ENCODE measurements at regions of chr9 and their contacts with region 1.

Region 1: DNA sequence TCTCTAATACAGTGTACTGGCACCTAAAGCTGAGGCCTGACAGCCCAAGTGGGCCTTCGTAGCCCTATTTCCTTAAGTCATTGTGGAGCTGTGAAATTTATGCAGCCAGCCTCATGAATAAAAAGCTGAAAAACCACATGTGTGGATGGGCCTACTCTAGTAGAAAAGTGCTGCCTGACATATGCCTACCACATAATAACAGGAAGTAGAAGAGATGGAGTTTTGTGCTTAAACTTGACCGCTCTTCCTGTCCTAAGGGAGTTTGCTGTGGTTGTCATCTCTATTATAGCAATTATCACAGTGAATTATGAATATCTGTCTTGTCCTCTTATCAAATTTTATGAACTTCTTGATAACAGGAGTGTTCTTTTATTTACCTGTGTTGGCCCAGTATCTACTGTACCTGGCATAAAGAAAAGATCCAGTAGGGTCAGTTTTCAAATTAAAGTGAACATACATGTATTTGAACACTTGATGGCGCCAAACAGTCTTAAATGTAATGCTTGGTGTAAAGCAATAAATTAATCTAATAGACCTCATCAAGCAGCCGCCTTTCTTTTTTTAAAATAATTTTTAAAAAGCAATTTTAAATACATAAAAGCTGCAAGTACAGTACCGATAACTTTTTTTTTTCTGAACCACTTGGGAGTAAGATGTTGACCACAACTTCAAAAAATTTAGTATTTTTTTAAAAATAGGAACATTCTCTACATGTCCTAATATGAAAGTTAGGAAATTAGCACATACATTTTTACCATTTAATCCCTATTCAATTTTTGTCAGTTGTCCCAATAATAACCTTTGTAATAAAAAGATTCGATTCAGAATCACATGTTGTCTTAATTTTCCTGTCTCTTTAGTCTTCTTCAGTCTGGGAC is 51.0 kb downstream of the FKTN start:
- DNase-seq: peak; percentile 4
- ATAC-seq: peak; percentile 82
- H3K4me3 ChIP-seq: no peak overlapping the region
- H3K27ac ChIP-seq: no peak overlapping the region
- H3K4me1 ChIP-seq: no peaks in the 10 kb centered on the region
- H3K27me3 ChIP-seq: no peaks in the 10 kb centered on the region
- CTCF ChIP-seq: peak; percentile 36 to 62 (median 36); a peak in 5 of 6 replicates
- EP300 ChIP-seq: no peak
- POLR2A ChIP-seq: no peak
- RAD21 ChIP-seq: peak; percentile 68

Region 2: GRCh38 chr9:105432247-105432842 is 176.6 kb before region 1 on chr9:
- CTCF ChIA-PET with region 1: no interaction called
- POLR2A ChIA-PET with region 1: no interaction called
- RAD21 ChIA-PET with region 1: no interaction called
- SMC1A ChIA-PET with region 1: no interaction called
- in situ Hi-C with region 1: no loop called
- intact Hi-C with region 1: loop called (anchors 5 kb)
- DNase-seq: no peak
- ATAC-seq: no peak
- H3K4me3 ChIP-seq: no peak overlapping the region
- H3K27ac ChIP-seq: no peak overlapping the region
- H3K4me1 ChIP-seq: no peaks in the 10 kb centered on the region
- H3K27me3 ChIP-seq: no peaks in the 10 kb centered on the region
- CTCF ChIP-seq: no peak
- EP300 ChIP-seq: no peak
- POLR2A ChIP-seq: no peak
- RAD21 ChIP-seq: no peak

Region 3: GRCh38 chr9:105593145-105593544 is 15.8 kb before region 1 on chr9:
- CTCF ChIA-PET with region 1: interaction called, 18 read pairs
- POLR2A ChIA-PET with region 1: no interaction called
- RAD21 ChIA-PET with region 1: interaction called, 5 read pairs
- SMC1A ChIA-PET with region 1: interaction called, 3 read pairs
- in situ Hi-C with region 1: no loop called
- intact Hi-C with region 1: no loop called
- DNase-seq: no peak
- ATAC-seq: no peak
- H3K4me3 ChIP-seq: no peak overlapping the region
- H3K27ac ChIP-seq: no peak overlapping the region
- H3K4me1 ChIP-seq: no peaks in the 10 kb centered on the region
- H3K27me3 ChIP-seq: no peaks in the 10 kb centered on the region
- CTCF ChIP-seq: no peak
- EP300 ChIP-seq: no peak
- POLR2A ChIP-seq: no peak
- RAD21 ChIP-seq: no peak

Region 4: GRCh38 chr9:105708405-105708804 is 99.4 kb after region 1 on chr9:
- CTCF ChIA-PET with region 1: no interaction called
- POLR2A ChIA-PET with region 1: no interaction called
- RAD21 ChIA-PET with region 1: no interaction called
- SMC1A ChIA-PET with region 1: no interaction called
- in situ Hi-C with region 1: loop called (anchors 5 kb)
- intact Hi-C with region 1: no loop called
- DNase-seq: no peak
- ATAC-seq: peak; percentile 65
- H3K4me3 ChIP-seq: peak overlapping the region; percentile 54; the same call in 1 of the 2 replicates
- H3K27ac ChIP-seq: peak overlapping the region; percentile 52
- H3K4me1 ChIP-seq: no peaks in the 10 kb centered on the region
- H3K27me3 ChIP-seq: no peaks in the 10 kb centered on the region
- CTCF ChIP-seq: no peak
- EP300 ChIP-seq: no peak
- POLR2A ChIP-seq: no peak
- RAD21 ChIP-seq: no peak

Region 5: DNA sequence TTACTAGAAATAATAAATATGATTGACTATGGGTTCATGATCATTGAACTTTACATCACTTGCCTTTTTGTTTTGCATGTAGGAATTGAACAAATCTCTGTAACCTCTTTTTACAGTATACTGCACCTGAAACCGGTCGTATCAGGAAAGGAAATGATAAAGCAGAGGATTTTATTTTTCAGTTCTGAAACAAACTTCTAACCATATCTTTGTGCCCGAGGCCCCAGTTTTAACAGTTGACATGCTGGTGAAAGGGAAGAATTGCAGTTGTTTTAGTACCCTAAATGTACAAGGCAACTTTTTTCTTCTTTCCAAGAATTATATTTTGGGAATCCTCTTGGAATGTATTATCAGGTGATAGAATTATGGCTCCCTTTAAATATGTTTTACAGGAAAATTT is 113.1 kb after region 1 on chr9:
- CTCF ChIA-PET with region 1: interaction called, 23 read pairs
- POLR2A ChIA-PET with region 1: no interaction called
- RAD21 ChIA-PET with region 1: interaction called, 8 read pairs
- SMC1A ChIA-PET with region 1: interaction called, 11 read pairs
- in situ Hi-C with region 1: no loop called
- intact Hi-C with region 1: loop called (anchors 1 kb)
- DNase-seq: no peak
- ATAC-seq: no peak
- H3K4me3 ChIP-seq: no peak overlapping the region
- H3K27ac ChIP-seq: no peak overlapping the region
- H3K4me1 ChIP-seq: no peaks in the 10 kb centered on the region
- H3K27me3 ChIP-seq: no peaks in the 10 kb centered on the region
- CTCF ChIP-seq: no peak
- EP300 ChIP-seq: no peak
- POLR2A ChIP-seq: no peak
- RAD21 ChIP-seq: no peak

Measured in GM12878 (cell line).